ENCODE measurements at regions of chr11 and their contacts with region 1.

Region 1: GRCh38 chr11:107590460-107591377 is at the start of gene ELMOD1:
- DNase-seq: no peak
- H3K4me3 ChIP-seq: peak within 1 kb of the TSS; percentile 55 to 58
- H3K27ac ChIP-seq: no peak within 1 kb of the TSS
- H3K4me1 ChIP-seq: peaks cover 18% of the 10 kb centered on the region
- H3K27me3 ChIP-seq: peaks cover 3% of the 10 kb centered on the region
- CTCF ChIP-seq: no peak
- POLR2A ChIP-seq: no peak
- total RNA-seq, gene ELMOD1: not detected

Region 2: DNA sequence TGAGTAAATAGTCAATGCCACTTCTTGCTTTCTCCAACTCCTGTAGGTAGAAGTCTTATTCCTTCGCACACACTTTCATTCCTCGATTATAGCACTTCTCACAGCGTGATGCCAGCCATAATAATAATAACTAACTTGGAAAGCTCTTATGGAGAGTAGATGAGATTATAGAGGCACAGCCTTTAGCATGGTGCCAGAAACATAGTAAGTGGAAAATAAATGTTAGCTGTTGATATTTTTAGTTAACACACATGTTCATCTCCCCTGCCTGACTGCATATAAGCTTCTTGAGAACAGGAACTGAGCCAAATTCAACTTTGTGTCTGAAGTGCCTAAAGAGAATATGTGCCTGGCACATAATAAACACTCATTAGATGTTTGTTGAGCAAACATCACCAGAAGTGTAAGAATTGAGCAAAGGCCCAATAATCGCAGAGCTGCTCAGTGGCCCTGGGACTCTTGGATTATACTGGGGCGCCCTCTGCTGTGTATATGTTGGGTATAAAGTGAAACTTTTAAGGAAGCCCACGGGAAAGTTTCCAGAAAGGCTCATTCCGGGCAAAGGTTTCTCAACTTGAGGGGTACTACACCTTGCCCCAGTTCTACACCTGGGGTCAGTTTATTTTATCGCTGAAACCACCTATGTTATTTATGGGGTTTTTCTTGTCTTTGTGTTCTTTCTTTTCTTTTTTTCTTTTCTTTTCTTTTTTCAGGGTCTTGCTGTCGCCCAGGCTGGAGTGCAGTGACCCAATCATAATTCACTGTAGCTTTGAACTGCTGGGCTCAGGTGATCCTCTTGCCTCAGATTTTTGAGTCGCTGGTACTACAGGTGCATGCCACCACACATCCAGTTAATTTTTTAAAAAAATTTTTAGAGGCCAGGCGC is 98.8 kb after region 1 on chr11:
- intact Hi-C with region 1: loop called (anchors 10 kb)
- DNase-seq: no peak
- H3K4me3 ChIP-seq: no peak overlapping the region
- H3K27ac ChIP-seq: no peak overlapping the region
- H3K4me1 ChIP-seq: peaks cover 7% of the 10 kb centered on the region
- H3K27me3 ChIP-seq: no peaks in the 10 kb centered on the region
- CTCF ChIP-seq: peak in 2 of 3 experiments; percentile 37 to 40
- POLR2A ChIP-seq: no peak

Measured in vagina (tissue), 2 donors.